Activated CD4-positive, alpha-beta T cell treated with anti-CD3 and anti-CD28 coated beads, Interleukin-2, amount 10 ng/mL, durations not matched to agents 7 days and 5 days (primary cell): ENCODE measurements at regions of chr4 and their contacts with region 1.

Region 1: DNA sequence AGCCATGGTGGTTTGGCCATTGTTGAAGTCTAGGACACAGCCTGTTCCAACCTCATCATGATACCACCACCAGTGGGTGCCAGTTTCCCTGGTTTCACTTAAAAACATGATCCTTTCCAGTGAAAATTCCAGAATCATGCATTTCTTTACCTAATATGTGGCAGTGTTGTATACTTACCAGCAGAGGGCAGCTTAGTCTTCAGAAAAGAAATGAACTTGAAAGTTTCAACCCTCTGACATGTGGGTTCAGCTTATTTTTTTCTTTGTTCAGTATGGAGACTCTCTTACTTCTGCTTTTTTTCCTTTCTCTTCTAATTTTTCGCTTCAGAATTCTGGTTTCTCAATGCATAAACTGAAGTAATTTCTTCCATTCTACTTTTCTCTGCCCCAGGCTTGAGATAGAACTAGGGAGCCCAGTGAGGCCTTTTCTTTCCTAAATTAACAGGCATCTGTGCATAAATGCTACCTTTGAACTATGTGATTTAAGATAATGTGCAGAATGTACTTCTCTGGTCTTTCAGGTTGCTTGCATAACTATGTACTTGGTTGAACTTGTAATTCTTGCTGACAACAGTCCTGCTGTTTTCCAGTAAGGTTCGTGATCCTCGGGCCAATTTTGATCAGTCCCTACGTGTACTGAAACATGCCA is 10.7 kb downstream of the LIAS start:
- DNase-seq: peak; percentile 25
- H3K4me3 Mint-ChIP-seq: no peak overlapping the region
- H3K27ac Mint-ChIP-seq: peak overlapping the region; percentile 65
- H3K4me1 Mint-ChIP-seq: peaks cover 9% of the 10 kb centered on the region
- H3K27me3 Mint-ChIP-seq: no peaks in the 10 kb centered on the region

Region 2: GRCh38 chr4:39205000-39205399 is 264.6 kb before region 1 on chr4:
- CTCF ChIA-PET with region 1: no interaction called
- POLR2A ChIA-PET with region 1: no interaction called
- DNase-seq: no peak
- H3K4me3 Mint-ChIP-seq: no peak overlapping the region
- H3K27ac Mint-ChIP-seq: no peak overlapping the region
- H3K4me1 Mint-ChIP-seq: no peaks in the 10 kb centered on the region
- H3K27me3 Mint-ChIP-seq: no peaks in the 10 kb centered on the region

Region 3: DNA sequence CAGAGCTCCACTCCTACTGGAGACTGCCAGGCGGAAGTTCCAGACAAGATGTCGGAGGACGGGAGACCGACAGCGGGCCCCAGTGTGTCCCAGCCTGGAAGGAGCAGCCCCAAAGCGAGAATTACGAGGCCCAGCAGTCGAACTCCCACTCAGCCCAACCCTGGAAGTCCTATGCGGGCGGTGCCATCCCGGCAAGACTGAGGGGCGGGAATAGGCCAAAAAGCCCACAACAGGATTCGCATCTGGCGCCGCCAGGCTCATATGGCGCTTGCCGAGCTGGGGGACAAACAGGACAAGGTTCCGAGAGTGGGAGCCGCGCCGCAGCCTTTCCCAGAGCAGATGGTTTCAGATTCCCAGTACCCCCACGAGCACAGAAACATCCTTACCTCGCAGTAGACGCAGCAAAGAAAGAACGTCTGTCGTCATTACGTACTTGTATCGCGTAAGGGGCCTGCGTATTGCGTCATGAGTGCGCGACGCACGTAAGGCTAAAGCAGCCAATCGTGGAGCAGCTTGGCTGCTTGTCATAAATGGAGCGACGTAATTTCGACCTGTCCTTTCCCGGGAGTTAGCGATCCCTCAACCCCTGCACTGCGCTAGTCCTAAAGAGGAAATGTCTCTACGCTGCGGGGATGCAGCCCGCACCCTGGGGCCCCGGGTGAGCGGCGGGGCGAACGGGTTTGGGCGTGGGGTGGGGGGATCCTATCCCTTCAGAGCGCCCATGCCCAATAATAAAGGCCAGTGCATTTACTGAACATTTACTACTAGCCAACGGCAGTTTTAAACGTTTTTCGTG is 10.8 kb before region 1 on chr4 and contains the starts of genes LIAS and RPL9:
- CTCF ChIA-PET with region 1: interaction called, 31 read pairs
- POLR2A ChIA-PET with region 1: no interaction called
- DNase-seq: peak; percentile 95
- H3K4me3 Mint-ChIP-seq: peak within 1 kb of the TSS; percentile 98
- H3K27ac Mint-ChIP-seq: peak within 1 kb of the TSS; percentile 100
- H3K4me1 Mint-ChIP-seq: peaks cover 49% of the 10 kb centered on the region
- H3K27me3 Mint-ChIP-seq: no peaks in the 10 kb centered on the region
- total RNA-seq, gene LIAS: 14.2 to 14.5 TPM
- total RNA-seq, gene RPL9: 868 to 1,019 TPM